ENCODE measurements at regions of chr1 and their contacts with region 1.

Region 1: DNA sequence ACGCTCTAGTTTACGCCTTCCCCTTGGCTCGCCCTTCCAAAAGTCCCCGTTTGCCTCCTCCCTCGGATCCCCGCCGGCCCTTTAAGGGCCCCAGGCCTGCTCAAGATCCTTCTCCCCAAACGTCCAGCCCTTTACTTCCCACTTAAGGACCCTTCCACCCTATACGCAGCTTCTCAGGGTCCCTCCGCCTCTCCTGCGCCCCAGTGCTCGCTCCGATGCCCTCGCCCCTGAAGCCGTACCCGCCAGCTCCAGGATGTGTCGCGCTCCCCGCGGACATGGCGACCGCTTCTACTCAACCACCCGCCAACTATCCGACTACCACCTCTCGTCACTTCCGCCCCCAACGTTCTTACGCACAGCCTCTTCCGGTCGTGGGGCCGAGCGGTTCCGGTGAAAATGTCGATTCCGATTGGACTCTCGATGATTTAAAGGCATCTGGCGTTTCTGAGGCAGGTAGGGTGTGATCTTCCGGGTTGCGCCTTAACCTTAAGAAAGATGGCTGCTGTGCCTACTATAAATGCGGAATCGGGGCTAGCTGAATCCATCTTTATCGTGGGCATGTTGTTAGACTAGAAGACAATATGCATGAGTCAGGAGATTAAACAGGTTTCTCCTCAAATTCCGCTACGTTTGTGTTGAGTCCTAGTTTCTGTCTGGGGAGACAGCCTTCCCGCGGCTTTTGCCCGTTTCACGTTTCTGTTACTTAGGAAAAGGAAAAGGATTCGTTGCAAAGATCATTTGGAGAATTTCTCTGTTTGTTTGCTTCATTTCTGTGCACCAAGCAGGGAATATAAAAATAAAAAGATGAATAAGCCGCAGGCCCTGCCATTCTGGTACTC is at the start of gene KHDC4:
- DNase-seq: peak; percentile 88
- ATAC-seq: peak; percentile 92
- H3K4me3 Mint-ChIP-seq: no peak within 1 kb of the TSS
- H3K27ac Mint-ChIP-seq: no peak within 1 kb of the TSS
- H3K4me1 Mint-ChIP-seq: peaks cover 20% of the 10 kb centered on the region
- H3K27me3 Mint-ChIP-seq: no peaks in the 10 kb centered on the region
- CTCF ChIP-seq: no peak
- total RNA-seq, gene KHDC4: 46.0 to 64.4 TPM (median 59.8 TPM) in 3 replicates

Region 2: GRCh38 chr1:156067262-156067661 is 132.9 kb after region 1 on chr1:
- CTCF ChIA-PET with region 1: interaction called, 41 read pairs
- POLR2A ChIA-PET with region 1: no interaction called
- DNase-seq: no peak
- ATAC-seq: no peak
- H3K4me3 Mint-ChIP-seq: no peak overlapping the region
- H3K27ac Mint-ChIP-seq: no peak overlapping the region
- H3K4me1 Mint-ChIP-seq: peaks cover 36% of the 10 kb centered on the region
- H3K27me3 Mint-ChIP-seq: no peaks in the 10 kb centered on the region
- CTCF ChIP-seq: no peak

Measured in WTC11 (cell line).